Heart right ventricle (tissue), 16 donors: ENCODE measurements at regions of chr12 and their contacts with region 1.

Region 1: DNA sequence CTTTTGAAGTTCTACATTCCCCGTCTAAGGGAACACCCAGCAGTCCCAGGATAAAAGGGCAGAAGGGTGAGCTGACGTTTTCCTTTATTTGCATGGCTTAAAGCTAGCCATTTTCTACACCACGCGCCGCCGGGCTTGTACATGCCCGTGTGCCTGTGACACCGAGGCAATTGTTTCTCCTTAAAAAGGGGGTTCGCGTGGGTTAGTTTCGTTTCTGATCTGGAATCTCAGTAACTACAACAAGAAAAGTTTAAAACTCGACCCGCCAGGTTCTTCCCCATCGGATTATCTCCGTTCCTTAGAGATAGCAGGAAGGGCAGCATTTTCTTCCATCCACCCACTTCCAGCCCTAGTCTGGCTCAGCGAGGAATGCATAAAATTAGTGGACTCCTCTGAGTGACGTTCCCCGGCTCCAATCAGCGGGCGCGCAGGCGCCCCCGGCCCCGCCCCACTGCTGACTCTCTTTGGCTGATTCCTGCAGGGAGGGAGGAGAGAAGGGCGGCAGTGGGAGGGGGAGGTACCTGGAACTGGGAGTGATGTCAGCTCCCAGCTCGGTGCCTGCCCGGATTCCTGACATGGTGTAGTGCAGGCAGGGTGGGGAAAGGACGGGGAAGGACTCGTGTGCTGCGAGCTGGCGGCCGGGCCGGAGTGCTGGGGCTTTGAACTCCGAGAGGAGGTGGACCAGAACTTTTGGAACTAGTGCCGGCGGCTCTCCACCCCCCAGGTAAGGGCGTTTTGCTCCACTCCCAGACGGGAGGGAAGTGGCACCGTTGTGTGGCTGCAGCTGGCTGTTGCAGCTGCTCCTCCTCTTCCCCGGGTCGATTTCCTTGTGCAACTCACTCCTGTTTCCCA is at the start of gene PPFIBP1:
- DNase-seq: peak; percentile 100
- ATAC-seq: peak; percentile 96 to 98 (median 97)
- H3K4me3 ChIP-seq: peak within 1 kb of the TSS; percentile 58 to 85 (median 75)
- H3K27ac ChIP-seq: peak within 1 kb of the TSS; percentile 84 to 97 (median 91)
- H3K4me1 ChIP-seq: peaks cover 2 to 63% (median 54%) of the 10 kb centered on the region in 9 donors
- H3K27me3 ChIP-seq: no peaks in the 10 kb centered on the region
- CTCF ChIP-seq: peak in 6 of 9 donors; percentile 3 to 47 (median 32)
- total RNA-seq, gene PPFIBP1: 233 to 450 (median 325) TPM

Region 2: DNA sequence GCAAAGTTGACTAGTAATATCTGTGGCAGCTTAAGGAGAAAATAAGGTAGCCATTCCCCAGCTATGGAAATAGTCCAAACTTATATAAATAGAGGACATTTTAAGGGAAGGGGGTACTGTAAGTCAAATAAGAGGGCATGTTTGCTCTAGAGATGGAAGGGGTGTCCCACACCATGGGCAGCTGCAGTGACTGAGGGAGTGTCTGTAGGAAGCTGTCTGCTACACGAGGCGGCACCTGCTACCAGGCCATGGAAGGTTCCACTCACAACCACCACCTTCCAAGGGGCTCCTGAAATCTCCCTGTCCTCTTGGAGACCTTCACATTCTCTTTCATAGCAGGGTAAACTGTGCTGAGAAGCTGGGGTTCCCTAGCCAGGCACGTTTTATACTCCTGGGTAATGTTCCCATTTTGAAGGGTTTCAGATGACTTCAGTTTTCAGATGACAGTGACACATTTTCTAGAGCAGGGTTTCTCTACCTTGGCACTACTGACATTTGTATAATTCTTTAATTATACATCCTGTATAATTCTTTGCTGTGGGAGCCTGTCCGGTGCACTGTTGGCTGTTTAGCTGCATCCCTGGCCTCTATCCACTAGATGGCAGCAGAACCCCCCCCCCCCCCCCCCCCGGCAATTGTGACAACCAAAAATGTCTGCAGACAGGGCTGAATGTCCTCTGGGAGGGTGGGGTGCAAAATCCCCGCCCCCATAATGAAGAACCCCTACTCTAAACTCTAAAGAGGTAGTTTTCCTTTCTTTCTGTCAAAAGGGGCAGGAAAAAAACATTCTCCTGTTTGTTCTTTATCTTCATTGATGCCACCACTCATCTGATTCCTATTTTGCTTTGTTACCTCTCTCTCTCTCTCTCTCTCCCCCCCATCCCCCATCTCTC is 88.9 kb before region 1 on chr12:
- intact Hi-C with region 1: loop called in 4 of 10 experiments (anchors 5 to 10 kb)
- DNase-seq: no peak
- ATAC-seq: peak in 6 of 8 donors; percentile 53 to 73 (median 62)
- H3K4me3 ChIP-seq: no peak overlapping the region
- H3K27ac ChIP-seq: peak overlapping the region in 4 of 10 donors; percentile 18 to 32 (median 27)
- H3K4me1 ChIP-seq: peaks cover 0 to 21% (median 14%) of the 10 kb centered on the region in 9 donors
- H3K27me3 ChIP-seq: no peaks in the 10 kb centered on the region
- CTCF ChIP-seq: peak; percentile 29 to 74 (median 63)

Region 3: GRCh38 chr12:27564612-27565213 is 40.8 kb after region 1 on chr12:
- intact Hi-C with region 1: loop called in 1 of 10 experiments (anchors 5 kb)
- DNase-seq: no peak
- ATAC-seq: peak in 6 of 8 donors; percentile 6 to 47 (median 37)
- H3K4me3 ChIP-seq: no peak overlapping the region
- H3K27ac ChIP-seq: peak overlapping the region in 7 of 10 donors; percentile 2 to 64 (median 53)
- H3K4me1 ChIP-seq: peaks cover 10 to 89% (median 61%) of the 10 kb centered on the region in 9 donors
- H3K27me3 ChIP-seq: no peaks in the 10 kb centered on the region
- CTCF ChIP-seq: no peak

Region 4: DNA sequence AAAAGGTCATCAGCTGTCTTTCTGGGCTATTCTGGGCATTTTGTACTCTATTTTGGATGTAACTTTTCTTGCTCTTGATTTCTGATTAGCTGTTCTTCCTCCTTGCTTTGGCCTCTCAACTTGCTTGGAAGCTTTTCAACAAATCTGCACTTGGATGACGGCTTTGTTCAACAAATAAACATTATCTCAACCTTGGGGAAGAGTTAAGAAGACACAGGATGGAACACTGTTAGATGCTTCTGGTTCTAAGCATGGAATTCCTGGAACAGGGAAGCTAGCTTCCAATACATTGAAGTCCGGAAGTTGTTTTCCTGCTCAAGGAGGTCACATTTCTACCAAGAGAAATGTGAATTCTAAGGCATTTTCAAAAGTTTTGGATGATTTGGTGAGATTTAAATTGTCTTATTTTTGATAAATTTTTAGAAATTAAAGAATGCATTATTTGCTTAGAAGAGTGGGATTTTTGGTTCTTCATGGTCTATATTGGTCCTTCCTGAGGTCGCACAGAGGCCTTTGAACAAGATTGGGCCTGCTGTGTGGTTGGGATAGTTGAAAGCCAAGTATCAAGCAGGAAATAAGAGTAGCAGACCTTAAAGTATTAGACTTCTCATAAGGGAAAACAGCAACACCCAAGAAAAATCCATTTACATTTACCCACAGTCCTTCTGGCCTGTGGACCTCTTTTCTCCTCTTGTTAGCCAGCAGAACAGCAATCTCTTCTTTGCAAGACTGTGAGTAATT is 59.4 kb after region 1 on chr12:
- intact Hi-C with region 1: loop called in 3 of 10 experiments (anchors 5 kb)
- DNase-seq: peak in 1 of 2 donors; percentile 68
- ATAC-seq: peak; percentile 54 to 82 (median 76)
- H3K4me3 ChIP-seq: no peak overlapping the region
- H3K27ac ChIP-seq: peak overlapping the region; percentile 57 to 89 (median 70)
- H3K4me1 ChIP-seq: peaks cover 25 to 92% (median 82%) of the 10 kb centered on the region in 9 donors
- H3K27me3 ChIP-seq: no peaks in the 10 kb centered on the region
- CTCF ChIP-seq: no peak

Region 5: GRCh38 chr12:27602516-27602915 is 78.6 kb after region 1 on chr12:
- intact Hi-C with region 1: no loop called
- DNase-seq: no peak
- ATAC-seq: no peak
- H3K4me3 ChIP-seq: no peak overlapping the region
- H3K27ac ChIP-seq: no peak overlapping the region
- H3K4me1 ChIP-seq: peaks cover 8 to 93% (median 57%) of the 10 kb centered on the region in 9 donors
- H3K27me3 ChIP-seq: no peaks in the 10 kb centered on the region
- CTCF ChIP-seq: no peak

Region 6: GRCh38 chr12:27635349-27635972 is 111.6 kb after region 1 on chr12:
- intact Hi-C with region 1: loop called in 8 of 10 experiments (anchors 5 to 10 kb)
- DNase-seq: no peak
- ATAC-seq: peak in 1 of 8 donors; percentile 44
- H3K4me3 ChIP-seq: no peak overlapping the region
- H3K27ac ChIP-seq: peak overlapping the region in 2 of 10 donors; percentile 3 to 35
- H3K4me1 ChIP-seq: peaks cover 4 to 60% (median 42%) of the 10 kb centered on the region in 9 donors
- H3K27me3 ChIP-seq: no peaks in the 10 kb centered on the region
- CTCF ChIP-seq: peak; percentile 31 to 75 (median 71)

Region 7: GRCh38 chr12:27652174-27652763 is 128.4 kb after region 1 on chr12:
- intact Hi-C with region 1: loop called in 5 of 10 experiments (anchors 5 to 10 kb)
- DNase-seq: peak in 1 of 2 donors; percentile 85
- ATAC-seq: peak in 7 of 8 donors; percentile 75 to 87 (median 82)
- H3K4me3 ChIP-seq: no peak overlapping the region
- H3K27ac ChIP-seq: no peak overlapping the region
- H3K4me1 ChIP-seq: peaks cover 0 to 15% (median 0%) of the 10 kb centered on the region in 9 donors
- H3K27me3 ChIP-seq: no peaks in the 10 kb centered on the region
- CTCF ChIP-seq: peak; percentile 74 to 95 (median 89)